ENCODE measurements at regions of chr15 and their contacts with region 1.

Region 1: DNA sequence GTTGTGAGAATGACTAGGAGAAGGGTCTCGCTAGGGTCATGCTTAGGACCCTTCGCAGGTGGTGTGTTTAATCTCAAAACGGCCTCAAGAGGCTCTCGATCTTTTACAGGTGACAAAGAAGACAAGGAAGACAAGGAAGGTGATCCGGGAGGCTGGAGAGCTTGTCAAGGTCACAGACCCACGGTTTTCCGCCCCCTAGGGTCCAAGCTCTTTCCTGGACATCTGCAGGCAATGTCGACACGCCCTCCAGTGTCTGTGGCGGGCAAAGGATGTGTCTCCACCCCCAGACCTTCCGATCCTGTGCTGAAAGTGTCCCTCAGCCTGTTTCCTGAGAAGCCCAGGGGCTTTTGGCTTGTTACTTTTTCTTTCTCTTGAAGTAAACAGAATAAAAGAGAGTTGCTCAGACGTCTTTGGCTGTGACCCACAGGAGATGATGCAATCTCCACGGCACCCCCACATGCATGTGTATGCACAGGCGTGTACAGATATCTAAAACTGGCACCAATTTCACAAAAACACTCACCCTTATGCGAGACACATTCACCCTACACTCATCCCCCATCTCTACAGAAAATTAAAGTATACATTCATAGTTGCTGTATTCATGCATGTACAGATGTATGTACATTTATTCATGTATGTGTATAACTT is 108.8 kb downstream of the KLF13 start:
- DNase-seq: peak; percentile 88 to 95 (median 95)
- H3K4me3 ChIP-seq: peak overlapping the region; percentile 11 to 73 (median 56)
- H3K27ac ChIP-seq: peak overlapping the region; percentile 95 to 97
- H3K4me1 ChIP-seq: peaks cover 9 to 67% (median 58%) of the 10 kb centered on the region in 4 experiments
- H3K27me3 ChIP-seq: no peaks in the 10 kb centered on the region

Region 2: DNA sequence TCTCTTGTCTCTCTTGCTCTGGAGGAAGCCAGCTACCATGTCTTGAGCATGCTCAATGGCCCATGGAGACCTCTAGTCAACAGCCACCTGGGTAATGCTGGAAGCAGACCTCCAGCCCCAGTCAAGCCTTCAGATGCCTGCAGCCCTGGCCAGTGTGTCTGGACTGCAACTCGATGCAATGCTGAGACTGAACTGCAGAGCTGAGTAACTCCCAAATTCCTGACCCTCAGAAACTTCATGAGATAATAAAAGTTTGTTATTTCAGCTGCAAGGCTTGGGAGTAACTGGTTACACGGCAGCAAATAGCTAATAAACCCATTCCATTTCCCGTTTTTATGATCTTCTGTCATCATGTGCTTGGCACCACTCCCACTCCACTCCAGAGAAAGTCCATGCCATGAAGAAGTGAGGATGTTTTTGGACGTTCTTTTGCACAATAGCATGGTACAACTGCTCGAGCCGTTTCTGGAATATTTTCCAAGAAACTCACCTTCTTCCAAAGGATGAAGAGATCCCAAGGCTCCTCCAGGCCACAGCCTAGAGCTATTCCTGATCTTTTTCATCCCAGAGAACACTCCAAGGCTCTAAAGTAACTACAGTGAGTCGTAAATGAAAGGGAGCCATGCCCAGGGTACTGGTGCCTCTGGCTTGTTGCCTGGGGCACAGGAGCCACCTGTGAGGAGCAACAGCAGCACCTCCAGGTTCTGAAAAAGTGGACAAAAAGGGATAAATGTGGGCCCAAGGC is 180.8 kb before region 1 on chr15:
- CTCF ChIA-PET with region 1: no interaction called
- POLR2A ChIA-PET with region 1: no interaction called
- DNase-seq: no peak
- H3K4me3 ChIP-seq: no peak overlapping the region
- H3K27ac ChIP-seq: no peak overlapping the region
- H3K4me1 ChIP-seq: peaks cover 0 to 36% (median 25%) of the 10 kb centered on the region in 4 experiments
- H3K27me3 ChIP-seq: no peaks in the 10 kb centered on the region

Region 3: GRCh38 chr15:31326156-31326732 is 109.1 kb before region 1 on chr15:
- CTCF ChIA-PET with region 1: interaction called, 6 read pairs
- POLR2A ChIA-PET with region 1: interaction called, 24 read pairs
- DNase-seq: peak; percentile 96 to 99 (median 99)
- H3K4me3 ChIP-seq: peak overlapping the region; percentile 38 to 86 (median 74)
- H3K27ac ChIP-seq: peak overlapping the region; percentile 86 to 93
- H3K4me1 ChIP-seq: peaks cover 12 to 56% (median 49%) of the 10 kb centered on the region in 4 experiments
- H3K27me3 ChIP-seq: no peaks in the 10 kb centered on the region

Region 4: GRCh38 chr15:31365655-31366127 is 69.7 kb before region 1 on chr15:
- CTCF ChIA-PET with region 1: interaction called, 30 read pairs
- POLR2A ChIA-PET with region 1: interaction called, 3 read pairs
- DNase-seq: peak; percentile 89 to 97 (median 94)
- H3K4me3 ChIP-seq: peak overlapping the region in 1 of 7 experiments; percentile 43
- H3K27ac ChIP-seq: no peak overlapping the region
- H3K4me1 ChIP-seq: peaks cover 34 to 71% (median 58%) of the 10 kb centered on the region in 4 experiments
- H3K27me3 ChIP-seq: no peaks in the 10 kb centered on the region

Region 5: GRCh38 chr15:31402511-31403056 is 32.8 kb before region 1 on chr15:
- CTCF ChIA-PET with region 1: interaction called, 12 read pairs
- POLR2A ChIA-PET with region 1: interaction called, 3 read pairs
- DNase-seq: no peak
- H3K4me3 ChIP-seq: no peak overlapping the region
- H3K27ac ChIP-seq: no peak overlapping the region
- H3K4me1 ChIP-seq: peaks cover 1 to 14% (median 10%) of the 10 kb centered on the region in 4 experiments
- H3K27me3 ChIP-seq: peaks cover 0 to 2% (median 0%) of the 10 kb centered on the region in 5 experiments

Region 6: DNA sequence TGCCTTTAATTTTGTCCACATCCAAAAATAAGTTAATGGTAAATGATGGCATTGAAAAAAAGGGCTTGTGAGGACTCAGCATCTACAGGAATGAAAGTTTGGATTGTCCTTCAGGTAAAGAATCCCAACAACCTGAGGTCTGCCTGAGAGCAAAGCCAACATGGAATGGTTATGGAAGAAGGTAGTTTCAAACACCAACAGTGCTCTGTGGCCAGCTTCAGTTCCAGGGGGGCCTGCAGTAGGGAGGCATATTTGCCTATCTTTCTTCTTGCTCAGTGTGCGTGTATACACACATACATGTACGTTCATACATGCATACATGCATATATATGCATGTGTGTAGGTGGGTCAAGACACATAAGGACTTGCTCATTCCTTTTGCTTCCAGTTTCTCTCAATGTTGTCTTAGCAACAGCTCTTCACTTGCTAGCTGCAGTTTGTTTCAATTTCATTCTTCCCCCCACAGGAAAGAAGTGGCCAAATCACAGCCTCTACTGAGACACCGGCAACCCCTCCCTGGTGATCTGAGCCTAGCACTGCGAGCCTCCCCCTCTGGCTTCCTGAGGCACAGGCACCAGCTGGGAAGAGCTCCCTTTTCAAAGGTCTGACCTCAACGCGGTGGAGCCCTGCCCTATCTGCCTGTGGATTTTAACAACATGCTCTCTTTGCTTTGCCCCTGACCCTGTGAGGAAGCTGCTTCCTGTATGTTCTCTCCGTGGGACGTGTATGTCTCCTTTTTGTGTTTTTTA is 37.4 kb after region 1 on chr15:
- CTCF ChIA-PET with region 1: interaction called, 14 read pairs
- POLR2A ChIA-PET with region 1: no interaction called
- DNase-seq: peak in 2 of 3 donors; percentile 62 to 64
- H3K4me3 ChIP-seq: peak overlapping the region in 4 of 7 experiments; percentile 15 to 54 (median 18)
- H3K27ac ChIP-seq: no peak overlapping the region
- H3K4me1 ChIP-seq: peaks cover 0 to 18% (median 10%) of the 10 kb centered on the region in 4 experiments
- H3K27me3 ChIP-seq: no peaks in the 10 kb centered on the region

Region 7: DNA sequence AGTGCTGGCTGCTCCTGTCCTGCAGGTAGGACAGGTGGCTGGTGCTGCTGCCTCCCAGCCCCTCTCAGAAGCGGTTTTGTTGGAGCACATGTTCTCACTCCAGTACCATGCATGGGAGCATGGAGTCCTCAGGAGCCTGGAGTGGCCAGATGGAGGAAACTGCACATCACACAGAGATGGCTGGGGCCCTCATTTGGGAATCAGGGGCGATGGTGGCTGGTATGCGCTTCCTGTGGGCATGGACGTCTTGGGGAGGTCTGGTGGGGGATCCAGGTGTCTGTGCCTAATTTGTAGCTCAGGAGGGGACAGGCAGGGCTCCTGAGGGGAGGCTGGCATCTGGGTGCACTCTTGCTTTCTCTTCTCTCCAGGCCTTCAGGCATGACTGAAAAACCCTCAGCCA is 59.4 kb after region 1 on chr15:
- CTCF ChIA-PET with region 1: interaction called, 188 read pairs
- POLR2A ChIA-PET with region 1: no interaction called
- DNase-seq: no peak
- H3K4me3 ChIP-seq: no peak overlapping the region
- H3K27ac ChIP-seq: no peak overlapping the region
- H3K4me1 ChIP-seq: peaks cover 0 to 2% (median 0%) of the 10 kb centered on the region in 4 experiments
- H3K27me3 ChIP-seq: peaks cover 0 to 10% (median 2%) of the 10 kb centered on the region in 5 experiments